Right cardiac atrium (tissue), 5 donors: ENCODE measurements at regions of chr7 and their contacts with region 1.

Region 1: DNA sequence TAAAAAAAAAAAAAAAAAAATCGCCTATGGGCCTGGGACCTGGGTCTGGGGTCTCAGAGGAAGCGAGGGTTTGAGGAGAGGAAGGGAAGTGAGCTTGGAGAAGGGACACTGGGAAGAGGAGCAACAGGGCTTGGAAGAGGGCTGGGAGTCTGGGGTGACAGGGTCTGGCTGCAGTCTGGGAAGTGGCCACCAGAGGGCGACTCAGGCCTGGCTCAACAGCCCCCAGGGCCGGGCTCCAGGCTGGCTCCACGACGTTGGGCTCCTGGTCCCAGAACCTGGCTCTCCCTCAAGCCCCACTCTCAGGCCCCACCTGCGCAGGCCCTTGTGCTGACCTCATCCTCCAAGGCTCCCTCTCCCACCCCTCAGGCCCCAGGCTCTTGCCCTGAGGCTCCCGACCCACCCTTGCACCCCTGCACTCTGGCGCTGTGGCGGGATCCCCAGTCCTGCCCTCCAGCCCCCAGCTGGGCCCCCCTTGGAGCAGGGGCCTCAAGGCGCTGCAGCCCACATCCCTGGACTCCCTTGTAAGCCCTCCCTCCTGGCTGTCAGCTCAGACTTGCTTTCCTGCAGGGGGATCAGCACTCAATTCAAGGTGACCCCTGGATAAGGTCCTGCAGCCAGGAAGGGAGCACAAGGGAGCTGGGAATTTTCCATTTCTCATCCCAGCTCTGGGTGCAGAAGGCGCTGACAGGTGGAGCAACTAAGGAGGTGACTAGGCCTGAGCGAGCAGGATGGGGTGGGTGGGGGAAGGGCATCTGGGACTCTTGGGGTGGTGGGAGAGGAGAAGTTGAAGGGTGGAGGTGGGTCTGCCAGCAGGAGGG is 5.4 kb upstream of the SPACDR start:
- DNase-seq: peak; percentile 86 to 96 (median 95)
- ATAC-seq: peak; percentile 69 to 73
- H3K4me3 ChIP-seq: no peak overlapping the region
- H3K27ac ChIP-seq: peak overlapping the region; percentile 68
- H3K4me1 ChIP-seq: peaks cover 12% of the 10 kb centered on the region
- H3K27me3 ChIP-seq: no peaks in the 10 kb centered on the region

Region 2: DNA sequence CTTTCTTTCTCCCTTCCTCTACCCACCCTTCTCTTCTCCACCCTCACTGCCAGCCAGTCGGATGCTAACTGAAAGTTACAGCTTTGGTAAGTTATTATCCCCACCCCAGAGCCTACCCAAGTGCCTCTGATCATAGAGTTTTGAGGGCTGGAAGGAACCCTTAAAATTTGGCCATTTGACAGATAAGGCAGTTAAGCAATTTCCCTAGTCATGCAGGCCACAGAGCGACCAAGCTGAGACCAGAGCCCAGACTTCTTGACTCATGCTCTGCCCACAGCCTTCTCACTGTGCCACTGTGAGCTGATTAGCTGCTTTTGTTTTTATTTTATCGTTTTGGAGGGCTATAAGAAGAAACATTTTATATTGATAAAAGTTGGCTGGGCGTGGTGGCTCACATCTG is 87.1 kb after region 1 on chr7:
- intact Hi-C with region 1: loop called (anchors 5 kb)
- DNase-seq: no peak
- ATAC-seq: no peak
- H3K4me3 ChIP-seq: no peak overlapping the region
- H3K27ac ChIP-seq: no peak overlapping the region
- H3K4me1 ChIP-seq: no peaks in the 10 kb centered on the region
- H3K27me3 ChIP-seq: no peaks in the 10 kb centered on the region

Region 3: DNA sequence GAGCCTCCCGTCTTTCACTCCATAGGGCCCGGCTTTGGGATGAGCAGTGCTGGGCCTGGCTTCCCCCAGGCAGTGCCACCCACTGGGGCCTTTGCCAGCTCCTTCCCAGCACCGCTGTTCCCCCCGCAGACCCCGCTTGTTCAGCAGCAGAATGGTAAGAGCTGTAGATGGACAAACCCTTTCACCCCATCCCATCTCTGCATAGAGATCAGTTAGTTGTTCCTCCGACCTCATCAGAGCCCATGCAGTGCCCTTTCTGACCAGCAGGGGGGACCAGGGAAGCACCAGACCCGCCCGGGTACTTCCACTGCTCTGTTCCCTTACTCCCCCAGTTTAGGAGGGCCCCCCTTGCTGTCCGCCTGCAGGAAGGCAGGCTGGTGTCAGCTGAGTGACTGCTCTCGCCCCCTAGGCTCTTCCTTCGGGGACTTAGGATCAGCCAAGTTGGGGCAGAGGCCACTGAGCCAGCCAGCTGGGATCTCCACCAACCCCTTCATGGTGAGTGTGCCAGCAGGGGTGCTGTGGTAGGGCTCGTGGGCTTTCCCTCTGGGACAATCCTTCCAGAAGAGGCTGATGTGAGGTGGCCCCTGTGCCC is 94.5 kb after region 1 on chr7:
- intact Hi-C with region 1: loop called (anchors 5 kb)
- DNase-seq: peak; percentile 80 to 93 (median 91)
- ATAC-seq: peak; percentile 45 to 68
- H3K4me3 ChIP-seq: no peak overlapping the region
- H3K27ac ChIP-seq: no peak overlapping the region
- H3K4me1 ChIP-seq: no peaks in the 10 kb centered on the region
- H3K27me3 ChIP-seq: no peaks in the 10 kb centered on the region

Region 4: DNA sequence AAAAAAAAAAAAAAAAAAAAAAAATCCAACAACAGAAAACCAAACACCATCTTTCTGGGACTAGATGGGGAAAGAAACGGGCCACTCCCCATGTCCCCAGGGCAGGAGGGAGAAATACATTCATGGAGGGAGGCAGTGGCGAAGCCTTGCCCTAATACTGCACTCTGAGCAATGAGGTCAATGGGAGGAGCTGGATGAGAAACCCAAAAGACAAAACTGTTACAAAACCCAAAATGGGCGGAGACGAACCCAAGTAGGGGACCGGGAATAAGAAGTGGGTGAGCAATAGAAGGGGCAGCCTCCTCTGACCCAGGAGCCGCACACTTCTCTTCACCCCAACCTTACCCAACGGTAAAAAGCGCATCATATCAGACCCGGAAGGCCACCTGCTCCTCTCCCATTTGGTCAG is 210.7 kb after region 1 on chr7:
- intact Hi-C with region 1: loop called in 2 of 4 experiments (anchors 10 kb)
- DNase-seq: peak; percentile 71 to 82 (median 72)
- ATAC-seq: peak; percentile 41 to 51
- H3K4me3 ChIP-seq: no peak overlapping the region
- H3K27ac ChIP-seq: peak overlapping the region; percentile 21
- H3K4me1 ChIP-seq: peaks cover 2% of the 10 kb centered on the region
- H3K27me3 ChIP-seq: no peaks in the 10 kb centered on the region

Region 5: GRCh38 chr7:100691676-100692577 is 222.5 kb after region 1 on chr7:
- intact Hi-C with region 1: loop called (anchors 10 kb)
- DNase-seq: peak; percentile 77 to 92 (median 92)
- ATAC-seq: peak; percentile 82 to 84
- H3K4me3 ChIP-seq: no peak overlapping the region
- H3K27ac ChIP-seq: peak overlapping the region; percentile 1
- H3K4me1 ChIP-seq: peaks cover 6% of the 10 kb centered on the region
- H3K27me3 ChIP-seq: no peaks in the 10 kb centered on the region